Ascending aorta (tissue), 2 donors: ENCODE measurements at regions of chr2 and their contacts with region 1.

Region 1: DNA sequence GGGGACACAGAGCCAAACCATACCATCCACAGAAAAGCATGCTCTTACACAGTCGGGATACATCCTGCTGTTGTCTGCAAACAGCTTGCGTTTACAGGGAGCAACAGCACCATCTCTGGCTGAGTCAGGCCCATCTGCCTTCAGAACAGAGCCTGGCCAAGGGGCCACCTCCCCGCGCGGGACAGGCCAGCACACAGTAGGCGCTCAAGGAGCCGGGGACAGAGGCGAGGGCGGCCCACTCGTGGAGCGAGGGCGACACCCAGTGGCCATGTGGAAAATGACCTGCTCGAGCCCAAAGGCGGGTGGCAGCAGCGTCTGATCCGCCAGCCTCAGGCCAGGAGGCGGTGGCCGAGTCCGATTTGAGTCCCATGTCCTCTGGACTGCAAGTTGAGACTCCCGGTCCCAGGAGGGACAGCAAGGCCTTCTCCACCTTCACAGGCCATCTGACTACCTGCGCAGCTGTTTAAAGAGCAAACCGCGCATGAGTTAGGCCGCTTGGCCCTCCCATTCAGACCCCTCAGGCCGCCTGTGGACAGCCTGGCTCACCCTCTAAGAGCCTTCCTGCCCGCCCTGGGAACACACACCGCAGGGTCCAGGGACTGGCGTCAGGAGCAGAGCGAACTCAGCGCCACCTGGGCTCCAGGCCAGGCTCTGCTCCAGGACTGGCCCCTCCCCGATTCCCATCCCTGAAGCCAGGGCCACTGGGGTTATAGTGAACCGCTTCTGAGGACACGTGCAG is 38.3 kb downstream of the TTC32 start:
- DNase-seq: peak in 1 of 2 donors; percentile 89
- H3K4me3 ChIP-seq: peak overlapping the region in 1 of 2 donors; percentile 50
- H3K27ac ChIP-seq: peak overlapping the region; percentile 89 to 91
- H3K4me1 ChIP-seq: peaks cover 14 to 42% of the 10 kb centered on the region in 2 donors
- H3K27me3 ChIP-seq: no peaks in the 10 kb centered on the region
- CTCF ChIP-seq: peak; percentile 97 to 98 (median 97)

Region 2: GRCh38 chr2:18435421-18436037 is 1427.9 kb before region 1 on chr2:
- intact Hi-C with region 1: loop called (anchors 5 kb)
- DNase-seq: no peak
- H3K4me3 ChIP-seq: no peak overlapping the region
- H3K27ac ChIP-seq: no peak overlapping the region
- H3K4me1 ChIP-seq: peaks cover 0 to 10% of the 10 kb centered on the region in 2 donors
- H3K27me3 ChIP-seq: no peaks in the 10 kb centered on the region
- CTCF ChIP-seq: peak in 2 of 3 experiments; percentile 42 to 68

Region 3: GRCh38 chr2:18749912-18750526 is 1113.5 kb before region 1 on chr2:
- intact Hi-C with region 1: loop called (anchors 1 kb)
- DNase-seq: peak in 1 of 2 donors; percentile 71
- H3K4me3 ChIP-seq: no peak overlapping the region
- H3K27ac ChIP-seq: no peak overlapping the region
- H3K4me1 ChIP-seq: no peaks in the 10 kb centered on the region
- H3K27me3 ChIP-seq: no peaks in the 10 kb centered on the region
- CTCF ChIP-seq: peak; percentile 52 to 83 (median 79)

Region 4: GRCh38 chr2:18987592-18988073 is 875.8 kb before region 1 on chr2:
- intact Hi-C with region 1: loop called (anchors 10 kb)
- DNase-seq: peak in 1 of 2 donors; percentile 86
- H3K4me3 ChIP-seq: no peak overlapping the region
- H3K27ac ChIP-seq: no peak overlapping the region
- H3K4me1 ChIP-seq: peaks cover 0 to 20% of the 10 kb centered on the region in 2 donors
- H3K27me3 ChIP-seq: no peaks in the 10 kb centered on the region
- CTCF ChIP-seq: peak in 1 of 3 experiments; percentile 29

Region 5: DNA sequence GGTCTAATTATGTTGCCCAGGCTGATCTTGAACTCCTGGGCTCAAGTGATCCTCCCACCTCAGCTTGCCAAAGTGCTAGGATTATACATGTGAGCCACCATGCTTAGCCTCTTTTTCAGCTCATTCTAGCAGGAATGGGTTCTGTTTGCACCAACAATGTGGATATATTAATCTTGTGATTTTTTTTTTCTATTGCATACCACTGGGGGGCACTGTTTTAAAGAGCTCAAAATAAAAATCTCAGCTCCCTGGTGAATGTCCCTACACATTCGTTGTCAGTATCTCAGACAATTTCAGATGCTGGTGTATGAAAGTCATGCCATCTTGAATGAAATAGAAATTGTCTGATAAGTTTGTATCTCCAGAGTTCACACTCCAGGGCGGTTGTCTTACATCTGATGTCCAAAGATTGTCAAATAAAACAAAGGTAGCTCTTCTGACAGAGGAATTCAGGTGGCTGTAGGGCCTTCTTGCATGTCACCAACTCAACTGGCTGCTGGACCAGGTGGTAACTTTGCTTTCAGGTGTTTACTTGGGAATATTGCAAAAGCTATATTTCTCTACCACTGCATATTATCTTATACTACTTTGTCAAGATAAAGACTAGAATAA is 152.1 kb after region 1 on chr2:
- intact Hi-C with region 1: no loop called
- DNase-seq: no peak
- H3K4me3 ChIP-seq: no peak overlapping the region
- H3K27ac ChIP-seq: no peak overlapping the region
- H3K4me1 ChIP-seq: peaks cover 3 to 6% of the 10 kb centered on the region in 2 donors
- H3K27me3 ChIP-seq: no peaks in the 10 kb centered on the region
- CTCF ChIP-seq: peak; percentile 49 to 62 (median 62)

Region 6: DNA sequence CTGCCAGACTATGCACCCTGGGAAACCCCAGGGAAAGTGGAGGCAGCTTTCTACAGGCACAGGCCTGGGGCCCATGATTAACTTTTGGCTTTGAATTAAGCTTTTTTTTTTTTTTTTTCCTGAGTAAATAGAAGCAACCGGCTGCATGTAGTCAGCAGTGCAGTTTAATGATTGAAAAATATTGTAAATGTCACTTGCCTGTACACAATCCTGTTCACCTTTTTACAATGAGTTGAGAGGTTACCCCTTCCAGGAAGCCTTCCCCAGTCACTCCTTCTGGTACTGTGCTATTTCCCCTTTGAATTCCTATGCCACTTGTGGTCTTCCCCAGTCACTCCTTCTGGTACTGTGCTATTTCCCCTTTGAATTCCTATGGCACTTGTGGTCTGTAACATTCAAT is 1735.9 kb after region 1 on chr2:
- intact Hi-C with region 1: no loop called
- DNase-seq: no peak
- H3K4me3 ChIP-seq: no peak overlapping the region
- H3K27ac ChIP-seq: no peak overlapping the region
- H3K4me1 ChIP-seq: no peaks in the 10 kb centered on the region
- H3K27me3 ChIP-seq: no peaks in the 10 kb centered on the region
- CTCF ChIP-seq: no peak